ENCODE measurements at regions of chr2 and their contacts with region 1.

Region 1: DNA sequence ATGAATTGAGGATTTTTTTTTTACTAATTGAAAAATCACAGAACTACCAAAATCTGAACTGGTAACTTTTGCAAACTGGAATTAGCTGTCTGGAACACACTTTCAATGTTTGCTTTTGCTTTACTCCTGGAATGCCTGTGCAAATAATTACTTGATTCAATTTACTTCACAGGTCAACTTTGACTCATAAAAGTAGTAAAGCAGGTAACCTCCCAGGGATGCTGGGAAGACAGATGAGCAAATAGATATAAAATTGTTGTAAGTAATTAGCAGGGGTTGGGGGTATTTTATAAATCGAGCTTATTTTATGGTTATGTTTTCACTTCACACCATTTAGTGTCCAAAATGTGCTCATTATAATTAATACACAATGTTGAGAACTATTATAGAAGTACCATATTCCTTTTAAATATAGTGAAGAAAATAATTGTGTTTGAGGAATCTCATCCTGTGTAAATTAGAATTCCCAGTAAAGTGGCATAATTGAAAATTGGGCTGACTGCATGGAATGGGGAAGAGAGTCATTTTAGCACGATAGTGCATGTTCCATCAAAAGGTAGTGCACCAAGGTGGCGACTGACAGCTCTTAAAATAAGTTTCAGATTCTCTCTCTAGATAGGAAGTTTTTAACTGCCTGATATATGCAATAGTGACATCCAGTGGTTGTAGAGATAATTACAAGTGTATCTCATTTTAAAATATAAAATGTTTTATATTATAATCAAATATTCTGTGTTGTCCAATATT is 398.1 kb upstream of the HNRNPA3 start:
- DNase-seq: no peak
- H3K4me3 Mint-ChIP-seq: no peak overlapping the region
- H3K27ac Mint-ChIP-seq: no peak overlapping the region
- H3K4me1 Mint-ChIP-seq: no peaks in the 10 kb centered on the region
- H3K27me3 Mint-ChIP-seq: no peaks in the 10 kb centered on the region

Region 2: GRCh38 chr2:176804392-176804791 is 10.1 kb before region 1 on chr2:
- CTCF ChIA-PET with region 1: interaction called, 16 read pairs
- POLR2A ChIA-PET with region 1: no interaction called
- intact Hi-C with region 1: no loop called
- DNase-seq: no peak
- H3K4me3 Mint-ChIP-seq: no peak overlapping the region
- H3K27ac Mint-ChIP-seq: no peak overlapping the region
- H3K4me1 Mint-ChIP-seq: no peaks in the 10 kb centered on the region
- H3K27me3 Mint-ChIP-seq: no peaks in the 10 kb centered on the region

Region 3: DNA sequence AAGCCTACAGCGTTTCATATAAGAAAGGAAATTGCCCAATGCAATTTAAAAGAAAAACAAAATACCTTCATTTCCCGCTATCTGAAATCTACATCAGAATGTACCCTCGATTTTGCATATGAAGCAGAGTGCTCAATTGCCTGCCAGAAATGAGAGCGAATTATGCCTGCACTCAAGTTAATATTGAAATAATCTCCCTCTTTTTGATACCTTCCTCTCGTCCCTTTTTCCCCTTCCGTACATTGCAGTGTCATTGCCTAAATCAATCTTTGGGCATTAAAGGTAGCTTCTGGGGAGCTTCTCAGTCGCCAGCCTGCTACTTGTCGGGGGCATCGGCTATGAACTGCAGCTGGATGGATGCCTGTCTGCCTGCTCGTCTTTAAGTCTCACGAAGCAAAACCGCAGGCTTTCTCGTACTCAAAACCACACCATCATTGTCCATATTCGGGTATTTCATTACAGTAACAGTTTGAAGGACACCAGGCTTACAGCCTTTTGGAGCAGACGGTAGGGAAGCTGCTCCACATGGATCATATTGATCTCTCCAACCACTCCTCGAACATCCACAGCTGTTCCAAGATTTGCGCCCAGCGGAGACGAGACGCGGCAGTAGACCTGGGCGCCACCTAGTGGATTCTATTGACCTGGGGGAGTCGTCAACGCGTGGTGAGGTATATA is 334.1 kb after region 1 on chr2:
- CTCF ChIA-PET with region 1: interaction called, 17 read pairs
- POLR2A ChIA-PET with region 1: no interaction called
- intact Hi-C with region 1: loop called (anchors 5 kb)
- DNase-seq: peak; percentile 81
- H3K4me3 Mint-ChIP-seq: peak overlapping the region; percentile 78
- H3K27ac Mint-ChIP-seq: no peak overlapping the region
- H3K4me1 Mint-ChIP-seq: peaks cover 12% of the 10 kb centered on the region
- H3K27me3 Mint-ChIP-seq: peaks cover 20% of the 10 kb centered on the region

Measured in activated CD4-positive, alpha-beta memory T cell treated with anti-CD3 and anti-CD28 coated beads for 36 hours (primary cell).